ENCODE measurements at regions of chr4 and their contacts with region 1.

Region 1: DNA sequence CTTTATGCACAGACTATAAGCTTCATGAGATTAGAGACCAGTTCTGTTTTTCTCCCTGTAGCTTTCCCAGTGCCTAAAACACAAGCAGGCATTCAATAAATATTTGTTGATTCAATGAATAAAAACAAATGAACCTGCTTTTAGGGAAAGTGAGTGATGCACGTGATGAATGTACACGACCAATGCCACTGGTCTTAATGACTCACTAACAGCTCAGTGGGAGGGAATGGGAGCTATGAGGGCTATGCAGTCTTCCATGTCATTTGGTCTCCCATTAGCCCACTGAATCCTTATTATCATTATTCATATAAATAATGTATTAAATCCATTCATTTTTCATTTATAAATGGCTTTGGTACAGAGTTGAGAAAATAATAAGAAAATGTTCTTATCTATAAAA is 247.4 kb downstream of the FBXO8 start:
- DNase-seq: no peak
- H3K4me3 ChIP-seq: no peak overlapping the region
- H3K4me3 Mint-ChIP-seq: no peak overlapping the region
- H3K27ac Mint-ChIP-seq: no peak overlapping the region
- H3K4me1 ChIP-seq: peaks cover 20% of the 10 kb centered on the region
- H3K4me1 Mint-ChIP-seq: peaks cover 11% of the 10 kb centered on the region
- H3K27me3 ChIP-seq: no peaks in the 10 kb centered on the region
- H3K27me3 Mint-ChIP-seq: no peaks in the 10 kb centered on the region
- CTCF ChIP-seq: no peak

Region 2: DNA sequence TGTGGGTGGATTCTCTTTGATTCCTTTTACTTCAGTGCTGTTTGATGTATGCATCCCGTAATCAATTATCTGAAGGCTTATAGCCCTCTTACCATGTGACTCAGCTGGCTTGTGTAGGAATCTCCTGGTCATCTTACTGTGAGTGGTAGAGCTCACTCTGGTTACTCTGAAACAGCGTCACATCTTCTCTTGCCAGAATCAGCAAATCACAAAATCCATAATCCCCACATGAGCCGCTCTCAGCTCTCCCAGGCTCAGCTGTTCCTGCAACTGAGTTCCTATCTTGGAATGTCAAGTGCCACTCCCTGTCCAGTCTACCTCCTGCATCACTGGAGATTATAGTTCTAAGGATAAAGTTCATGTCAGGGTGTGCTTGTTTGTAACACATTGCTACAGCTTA is 30.7 kb before region 1 on chr4:
- CTCF ChIA-PET with region 1: no interaction called
- POLR2A ChIA-PET with region 1: no interaction called
- intact Hi-C with region 1: loop called (anchors 1 kb)
- DNase-seq: peak; percentile 44 to 56
- H3K4me3 ChIP-seq: no peak overlapping the region
- H3K4me3 Mint-ChIP-seq: peak overlapping the region; percentile 43
- H3K27ac Mint-ChIP-seq: peak overlapping the region; percentile 71
- H3K4me1 ChIP-seq: peaks cover 14% of the 10 kb centered on the region
- H3K4me1 Mint-ChIP-seq: peaks cover 20% of the 10 kb centered on the region
- H3K27me3 ChIP-seq: no peaks in the 10 kb centered on the region
- H3K27me3 Mint-ChIP-seq: no peaks in the 10 kb centered on the region
- CTCF ChIP-seq: no peak

Region 3: DNA sequence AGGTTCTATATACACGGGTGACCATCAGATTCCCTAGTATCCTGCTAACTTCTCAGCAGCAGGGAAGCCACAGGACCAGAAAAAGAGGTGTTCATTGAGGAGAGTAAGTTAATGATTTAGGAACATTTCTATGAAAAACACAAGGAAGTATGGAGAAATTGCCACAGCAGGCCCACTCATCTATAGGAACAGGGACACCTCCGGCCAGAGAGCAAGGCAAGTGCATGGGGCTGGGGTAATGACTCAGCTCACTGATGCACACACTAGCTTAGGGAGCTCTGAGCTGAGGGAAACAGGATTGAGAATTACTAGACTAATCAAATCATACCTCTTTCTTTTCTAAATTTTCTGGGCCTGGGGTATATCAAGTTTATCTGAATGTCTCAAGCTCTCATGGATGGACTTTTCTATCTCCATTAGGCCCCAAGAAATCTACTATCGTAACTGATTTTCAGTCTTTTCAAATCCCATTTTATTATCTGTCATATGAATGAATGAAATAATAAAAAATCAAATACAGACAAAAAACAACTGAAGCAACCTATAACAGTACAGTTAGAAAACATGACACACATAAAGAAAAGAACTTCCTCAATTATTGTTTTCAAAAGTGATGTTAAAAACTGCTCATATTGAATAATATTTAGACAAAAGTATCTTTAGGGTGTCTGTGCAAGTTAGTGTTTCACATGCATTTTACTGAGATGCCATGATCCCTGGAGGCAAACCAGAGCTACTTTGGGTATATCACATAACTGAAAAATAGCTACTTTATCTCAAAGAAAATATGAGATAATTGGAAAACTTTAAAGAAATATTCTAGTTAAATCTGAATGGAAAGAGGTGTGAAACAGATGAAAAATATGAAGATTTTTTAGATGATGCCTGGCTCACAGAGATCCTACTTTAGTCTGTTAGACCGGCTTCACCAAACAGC is 157.6 kb after region 1 on chr4:
- CTCF ChIA-PET with region 1: no interaction called
- POLR2A ChIA-PET with region 1: no interaction called
- intact Hi-C with region 1: loop called (anchors 2 kb)
- DNase-seq: peak; percentile 47 to 56
- H3K4me3 ChIP-seq: no peak overlapping the region
- H3K4me3 Mint-ChIP-seq: peak overlapping the region; percentile 12
- H3K27ac Mint-ChIP-seq: peak overlapping the region; percentile 59
- H3K4me1 ChIP-seq: peaks cover 43% of the 10 kb centered on the region
- H3K4me1 Mint-ChIP-seq: peaks cover 8% of the 10 kb centered on the region
- H3K27me3 ChIP-seq: no peaks in the 10 kb centered on the region
- H3K27me3 Mint-ChIP-seq: no peaks in the 10 kb centered on the region
- CTCF ChIP-seq: no peak

Measured in Caco-2 (cell line).